Motor neuron (in vitro differentiated cells): ENCODE measurements at regions of chr2 and their contacts with region 1.

Region 1: DNA sequence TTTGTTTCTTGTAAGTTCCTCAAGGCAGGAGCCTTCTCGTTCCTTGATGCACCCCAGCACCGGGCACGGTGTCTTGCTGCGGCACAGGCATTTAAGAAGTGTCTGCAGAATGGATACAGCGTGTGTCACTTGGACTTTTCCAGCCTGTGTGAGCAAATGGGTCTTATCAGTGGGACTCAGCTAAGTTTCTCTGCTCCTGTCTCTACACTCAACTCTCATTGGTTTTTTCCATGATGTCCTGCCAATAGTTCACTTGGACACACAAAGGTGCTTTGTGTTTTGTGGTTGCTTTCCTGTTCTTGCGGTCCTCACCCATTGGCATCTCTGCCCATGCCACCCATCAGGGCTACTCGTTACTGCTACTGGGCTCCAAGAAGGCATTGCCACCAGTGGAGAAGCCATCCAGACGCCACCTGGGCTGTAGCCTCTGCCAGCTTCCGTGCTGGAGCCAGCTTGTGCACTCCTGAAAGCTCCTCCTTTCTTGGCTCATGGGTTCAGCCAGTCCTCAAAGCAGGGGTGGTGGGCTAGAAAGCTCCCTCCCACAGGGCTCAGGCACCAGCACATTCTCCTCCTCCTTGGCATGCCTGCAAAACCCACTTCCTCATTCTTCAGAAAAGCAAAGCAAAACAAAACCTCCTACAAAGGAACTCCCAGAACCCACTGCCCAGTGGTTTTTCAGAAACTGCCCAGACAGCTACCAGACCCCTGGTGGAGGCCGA is 41.4 kb downstream of the IL1R2 start:
- ATAC-seq: no peak
- H3K4me3 ChIP-seq: no peak overlapping the region
- H3K27ac ChIP-seq: no peak overlapping the region
- H3K4me1 ChIP-seq: no peaks in the 10 kb centered on the region

Region 2: GRCh38 chr2:101533561-101534148 is 499.5 kb before region 1 on chr2:
- in situ Hi-C with region 1: no loop called
- ATAC-seq: peak; percentile 54 to 97 (median 90)
- H3K4me3 ChIP-seq: no peak overlapping the region
- H3K27ac ChIP-seq: peak overlapping the region; percentile 62 to 63
- H3K4me1 ChIP-seq: peaks cover 4% of the 10 kb centered on the region in 2 donors

Region 3: DNA sequence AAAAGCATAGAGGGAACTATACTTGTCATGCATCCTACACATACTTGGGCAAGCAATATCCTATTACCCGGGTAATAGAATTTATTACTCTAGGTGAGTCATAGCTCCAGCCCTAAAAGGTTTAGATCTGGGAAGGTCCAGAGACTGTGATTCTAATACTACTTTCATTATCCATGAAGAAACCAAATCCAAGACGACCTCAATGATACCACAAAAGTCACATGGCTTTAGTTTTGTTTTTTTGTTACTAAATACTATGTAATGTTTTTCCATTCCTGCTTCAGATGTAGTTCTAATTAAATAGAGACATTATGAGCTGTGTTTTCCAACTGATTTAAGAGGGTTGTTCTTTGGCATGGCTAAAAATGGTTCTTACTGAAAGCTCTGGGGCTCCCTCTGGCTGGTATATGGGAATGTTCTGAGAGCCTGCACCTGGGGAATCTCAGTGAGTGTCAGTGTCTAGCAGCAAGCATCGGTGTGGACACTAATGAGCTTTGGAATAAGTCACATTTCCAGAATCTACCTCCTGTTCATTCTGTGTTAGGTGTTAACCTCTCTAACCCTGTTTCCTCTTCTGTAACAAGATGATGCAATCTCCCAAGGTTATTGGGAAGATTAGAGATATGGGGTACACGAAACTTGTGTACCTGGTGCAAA is 133.1 kb after region 1 on chr2:
- in situ Hi-C with region 1: loop called in 2 of 9 experiments (anchors 10 to 25 kb)
- ATAC-seq: peak; percentile 39 to 94 (median 63)
- H3K4me3 ChIP-seq: no peak overlapping the region
- H3K27ac ChIP-seq: no peak overlapping the region
- H3K4me1 ChIP-seq: no peaks in the 10 kb centered on the region

Region 4: GRCh38 chr2:102815285-102815684 is 782.1 kb after region 1 on chr2:
- in situ Hi-C with region 1: no loop called
- ATAC-seq: no peak
- H3K4me3 ChIP-seq: no peak overlapping the region
- H3K27ac ChIP-seq: no peak overlapping the region
- H3K4me1 ChIP-seq: no peaks in the 10 kb centered on the region